ENCODE measurements at regions of chr6 and their contacts with region 1.

Region 1: GRCh38 chr6:125197795-125198269 is 44.3 kb downstream of the TPD52L1 start:
- DNase-seq: peak; percentile 98
- H3K4me3 Mint-ChIP-seq: no peak overlapping the region
- H3K27ac Mint-ChIP-seq: peak overlapping the region; percentile 82
- H3K4me1 Mint-ChIP-seq: peaks cover 62% of the 10 kb centered on the region
- H3K27me3 Mint-ChIP-seq: no peaks in the 10 kb centered on the region
- CTCF ChIP-seq: no peak

Region 2: DNA sequence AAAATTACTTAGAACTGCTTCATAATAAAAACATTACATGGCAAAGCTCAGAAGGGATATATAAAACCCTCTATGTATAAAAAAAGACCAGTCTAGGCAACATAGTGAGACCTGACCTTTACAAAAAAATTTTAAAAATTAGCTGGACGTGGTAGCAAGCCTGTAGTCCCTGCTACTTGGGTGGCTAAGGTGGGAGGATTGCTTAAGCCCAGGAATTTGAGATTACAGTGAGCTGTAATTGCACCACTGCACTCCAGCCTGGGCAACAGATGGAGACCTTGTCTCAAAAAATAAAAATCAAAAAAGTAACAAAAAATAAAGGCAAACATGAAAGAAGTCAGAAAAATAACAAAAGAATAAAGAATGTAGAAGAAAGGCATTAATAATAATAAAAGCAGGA is 65.8 kb before region 1 on chr6:
- CTCF ChIA-PET with region 1: no interaction called
- POLR2A ChIA-PET with region 1: no interaction called
- intact Hi-C with region 1: no loop called
- DNase-seq: no peak
- H3K4me3 Mint-ChIP-seq: no peak overlapping the region
- H3K27ac Mint-ChIP-seq: no peak overlapping the region
- H3K4me1 Mint-ChIP-seq: no peaks in the 10 kb centered on the region
- H3K27me3 Mint-ChIP-seq: no peaks in the 10 kb centered on the region
- CTCF ChIP-seq: no peak

Region 3: GRCh38 chr6:125245523-125246260 is 47.9 kb after region 1 on chr6:
- CTCF ChIA-PET with region 1: interaction called, 5 read pairs
- POLR2A ChIA-PET with region 1: interaction called, 17 read pairs
- intact Hi-C with region 1: no loop called
- DNase-seq: peak; percentile 74
- H3K4me3 Mint-ChIP-seq: no peak overlapping the region
- H3K27ac Mint-ChIP-seq: peak overlapping the region; percentile 57
- H3K4me1 Mint-ChIP-seq: peaks cover 19% of the 10 kb centered on the region
- H3K27me3 Mint-ChIP-seq: no peaks in the 10 kb centered on the region
- CTCF ChIP-seq: no peak

Region 4: DNA sequence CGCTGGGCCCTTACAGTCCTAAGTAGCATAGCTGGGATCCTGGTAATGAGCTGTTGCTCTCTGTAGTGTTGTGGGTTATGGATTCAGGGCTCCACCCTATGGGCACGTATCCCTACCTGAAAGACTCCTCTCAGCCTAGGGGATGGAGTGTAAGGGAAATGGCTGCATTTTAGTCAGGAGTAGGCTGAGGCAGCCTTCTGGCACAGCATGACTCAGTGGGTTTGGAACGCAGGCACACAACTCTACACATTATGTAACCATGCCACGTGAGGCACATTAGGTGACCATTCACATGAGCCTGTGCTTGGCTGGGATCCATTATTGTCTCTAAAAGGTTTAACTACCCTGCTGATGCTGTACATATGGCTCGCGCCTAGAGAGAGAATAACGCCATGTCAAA is 76.1 kb after region 1 on chr6:
- CTCF ChIA-PET with region 1: interaction called, 14 read pairs
- POLR2A ChIA-PET with region 1: interaction called, 24 read pairs
- intact Hi-C with region 1: no loop called
- DNase-seq: peak; percentile 99
- H3K4me3 Mint-ChIP-seq: peak overlapping the region; percentile 18
- H3K27ac Mint-ChIP-seq: peak overlapping the region; percentile 79
- H3K4me1 Mint-ChIP-seq: peaks cover 30% of the 10 kb centered on the region
- H3K27me3 Mint-ChIP-seq: no peaks in the 10 kb centered on the region
- CTCF ChIP-seq: no peak

Region 5: DNA sequence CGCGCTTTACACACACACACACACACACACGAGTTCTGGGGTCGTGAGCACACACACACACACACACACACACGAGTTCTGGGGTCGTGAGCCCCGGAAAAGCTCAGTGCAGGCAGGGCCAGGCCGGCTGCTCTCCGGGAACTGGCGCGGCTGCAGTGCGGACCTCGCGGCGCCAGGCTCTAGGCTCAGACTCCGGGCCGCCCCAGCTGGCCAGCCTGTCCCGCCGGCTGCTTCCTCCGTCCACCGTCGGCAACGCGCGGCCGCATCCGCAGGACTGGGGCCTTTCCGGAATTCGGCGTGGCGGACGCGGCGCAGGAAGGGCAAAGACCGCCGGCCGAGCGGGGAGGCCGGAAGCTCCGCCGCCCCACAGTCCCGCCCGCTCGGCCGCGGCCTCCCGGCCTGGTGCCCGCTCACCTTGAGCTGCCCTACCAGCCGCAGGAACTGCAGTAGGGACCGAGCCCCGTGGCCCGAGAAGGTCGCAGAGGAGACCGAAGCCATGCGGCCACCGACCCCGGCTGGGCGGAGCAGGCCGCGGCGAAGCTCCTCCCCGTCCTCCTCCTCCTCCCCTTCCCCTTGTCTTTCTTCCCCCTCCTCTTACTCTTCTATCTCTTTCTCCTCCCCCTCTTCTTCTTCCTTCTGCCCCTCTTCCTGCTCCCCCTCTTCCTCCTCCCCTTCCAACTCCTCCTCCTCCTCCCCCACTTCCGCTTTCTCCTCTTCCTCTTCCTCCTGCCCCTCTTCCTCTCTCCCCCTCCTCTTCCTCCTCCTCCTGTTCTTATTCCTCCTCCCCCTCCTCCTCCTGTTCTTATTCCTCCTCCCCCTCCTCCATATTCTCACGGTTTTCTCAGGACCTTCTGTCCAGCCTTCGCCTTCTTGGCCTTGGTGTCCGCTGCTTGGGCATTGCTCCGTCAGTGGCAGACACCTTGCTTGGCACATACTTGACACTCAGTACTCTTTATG is 103.9 kb after region 1 on chr6 and contains the start of gene HDDC2:
- CTCF ChIA-PET with region 1: interaction called, 9 read pairs
- POLR2A ChIA-PET with region 1: interaction called, 30 read pairs
- intact Hi-C with region 1: loop called (anchors 2 kb)
- DNase-seq: peak; percentile 60
- H3K4me3 Mint-ChIP-seq: peak within 1 kb of the TSS; percentile 79
- H3K27ac Mint-ChIP-seq: peak within 1 kb of the TSS; percentile 33
- H3K4me1 Mint-ChIP-seq: peaks cover 31% of the 10 kb centered on the region
- H3K27me3 Mint-ChIP-seq: peaks cover 7% of the 10 kb centered on the region
- CTCF ChIP-seq: no peak
- total RNA-seq, gene HDDC2: 141 and 167 TPM in 2 replicates

Region 6: DNA sequence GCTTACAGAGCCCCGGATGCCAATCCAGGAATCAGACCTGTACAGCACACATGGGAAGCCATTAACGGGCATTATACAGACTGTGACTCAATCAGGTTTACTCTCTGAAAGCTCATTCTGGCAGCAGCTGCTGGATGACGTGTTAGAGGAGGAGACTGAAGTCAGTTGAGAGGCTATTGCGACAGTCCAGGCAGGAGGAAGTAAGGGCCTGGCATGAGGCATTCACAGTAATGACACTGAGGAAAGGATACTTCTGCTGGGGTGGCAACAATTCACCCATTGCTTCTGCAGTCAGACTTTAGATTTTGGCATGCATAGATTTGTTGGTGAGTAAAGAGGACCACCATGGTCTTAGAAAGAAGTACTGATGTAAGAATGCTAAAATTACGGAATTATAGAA is 400.6 kb after region 1 on chr6:
- CTCF ChIA-PET with region 1: no interaction called
- POLR2A ChIA-PET with region 1: no interaction called
- intact Hi-C with region 1: no loop called
- DNase-seq: peak; percentile 89
- H3K4me3 Mint-ChIP-seq: no peak overlapping the region
- H3K27ac Mint-ChIP-seq: no peak overlapping the region
- H3K4me1 Mint-ChIP-seq: peaks cover 8% of the 10 kb centered on the region
- H3K27me3 Mint-ChIP-seq: peaks cover 44% of the 10 kb centered on the region
- CTCF ChIP-seq: no peak

Measured in MCF 10A (cell line).